Caki2 (cell line): ENCODE measurements at regions of chr2 and their contacts with region 1.

Region 1: DNA sequence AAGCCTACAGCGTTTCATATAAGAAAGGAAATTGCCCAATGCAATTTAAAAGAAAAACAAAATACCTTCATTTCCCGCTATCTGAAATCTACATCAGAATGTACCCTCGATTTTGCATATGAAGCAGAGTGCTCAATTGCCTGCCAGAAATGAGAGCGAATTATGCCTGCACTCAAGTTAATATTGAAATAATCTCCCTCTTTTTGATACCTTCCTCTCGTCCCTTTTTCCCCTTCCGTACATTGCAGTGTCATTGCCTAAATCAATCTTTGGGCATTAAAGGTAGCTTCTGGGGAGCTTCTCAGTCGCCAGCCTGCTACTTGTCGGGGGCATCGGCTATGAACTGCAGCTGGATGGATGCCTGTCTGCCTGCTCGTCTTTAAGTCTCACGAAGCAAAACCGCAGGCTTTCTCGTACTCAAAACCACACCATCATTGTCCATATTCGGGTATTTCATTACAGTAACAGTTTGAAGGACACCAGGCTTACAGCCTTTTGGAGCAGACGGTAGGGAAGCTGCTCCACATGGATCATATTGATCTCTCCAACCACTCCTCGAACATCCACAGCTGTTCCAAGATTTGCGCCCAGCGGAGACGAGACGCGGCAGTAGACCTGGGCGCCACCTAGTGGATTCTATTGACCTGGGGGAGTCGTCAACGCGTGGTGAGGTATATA is 64.0 kb upstream of the HNRNPA3 start:
- DNase-seq: peak; percentile 72

Region 2: GRCh38 chr2:176653479-176654443 is 494.9 kb before region 1 on chr2:
- in situ Hi-C with region 1: loop called (anchors 25 kb)
- DNase-seq: peak; percentile 77